ENCODE measurements at regions of chr6 and their contacts with region 1.

Region 1: GRCh38 chr6:20534295-20535262 is at the start of gene CDKAL1:
- DNase-seq: peak; percentile 90
- ATAC-seq: peak; percentile 96
- total RNA-seq, gene CDKAL1: 9.9 TPM

Region 2: DNA sequence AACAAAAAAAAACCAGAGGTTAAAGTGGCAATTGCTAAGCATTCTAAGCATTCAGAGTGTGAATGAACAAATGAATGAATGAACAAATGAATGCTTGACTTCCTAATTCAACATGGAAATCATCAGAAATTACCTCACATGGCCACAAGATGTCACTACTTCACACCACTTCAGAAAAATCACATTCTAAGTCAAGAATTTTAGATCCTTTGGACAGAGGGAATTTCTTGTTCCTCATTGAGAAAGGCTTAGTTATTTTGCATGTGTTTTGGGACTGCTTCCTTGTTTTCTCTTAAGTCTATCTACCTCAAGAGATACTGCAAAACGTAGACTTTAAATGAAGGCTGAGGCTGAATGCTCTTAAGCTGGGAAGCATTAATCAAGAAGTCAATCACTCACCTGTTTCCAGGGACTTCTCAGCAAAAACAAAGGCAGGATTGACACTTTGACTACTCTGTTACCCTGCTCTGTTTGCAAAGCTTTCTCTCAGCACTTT is 442.5 kb before region 1 on chr6:
- intact Hi-C with region 1: loop called (anchors 10 kb)
- DNase-seq: no peak
- ATAC-seq: no peak

Region 3: GRCh38 chr6:20291764-20292580 is 242.6 kb before region 1 on chr6:
- intact Hi-C with region 1: loop called (anchors 2 kb)
- DNase-seq: peak; percentile 50
- ATAC-seq: peak; percentile 89

Region 4: GRCh38 chr6:20401205-20402091 is 133.1 kb before region 1 on chr6 and contains the start of gene E2F3:
- intact Hi-C with region 1: loop called (anchors 5 kb)
- DNase-seq: peak; percentile 99
- ATAC-seq: peak; percentile 93
- total RNA-seq, gene E2F3: 5.6 TPM